Mammary epithelial cell (primary cell): ENCODE measurements at regions of chr1 and their contacts with region 1.

Region 1: DNA sequence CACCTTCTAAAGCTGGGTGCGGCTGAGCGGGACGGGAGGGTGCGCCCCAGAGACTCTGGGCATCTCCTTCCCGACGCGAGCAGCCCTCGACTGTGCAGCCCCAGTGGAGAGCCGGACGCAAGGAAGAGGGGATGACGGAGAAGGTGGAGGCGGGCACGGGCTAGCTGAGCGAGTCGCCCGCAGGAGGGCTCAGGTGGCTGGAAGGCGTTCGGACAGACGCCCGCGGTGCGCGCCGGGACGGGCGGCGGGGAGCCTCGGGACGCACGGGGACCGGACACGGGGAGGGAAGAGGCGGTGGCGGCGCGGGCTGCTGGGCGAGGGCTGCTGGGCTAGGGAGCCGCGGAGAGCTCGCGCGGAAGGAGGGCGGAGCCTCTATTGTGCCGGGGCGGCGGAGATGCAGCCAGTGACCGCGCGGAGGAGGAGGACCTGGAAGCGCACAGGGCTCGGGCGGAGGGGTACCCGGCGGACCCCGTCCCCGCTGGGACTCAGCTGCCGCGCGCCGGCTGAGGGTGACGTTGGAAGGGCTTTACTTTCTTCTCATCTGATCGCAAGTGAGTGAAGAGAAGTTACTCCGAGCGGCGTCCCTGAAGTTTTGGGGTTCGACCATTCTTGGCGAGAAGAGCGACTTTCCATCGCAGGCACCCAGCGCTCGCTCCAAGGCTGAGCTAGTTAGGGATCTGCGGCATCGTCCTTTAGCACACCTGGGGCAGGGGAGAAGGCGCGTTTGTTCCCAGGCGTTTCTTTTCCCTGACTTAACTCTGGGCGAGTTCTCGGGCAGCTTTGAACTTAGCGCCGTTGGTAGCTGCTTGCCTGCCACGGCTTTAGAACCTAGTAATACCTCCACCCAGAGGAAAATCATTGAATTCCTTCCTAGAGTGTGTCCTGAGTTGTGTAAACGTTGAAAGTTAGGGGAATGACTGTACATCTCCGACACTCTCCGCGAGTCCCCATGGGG is at the start of gene OLFML2B:
- DNase-seq: peak; percentile 78
- H3K4me3 ChIP-seq: peak within 1 kb of the TSS; percentile 68 to 75 (median 68)
- H3K27ac ChIP-seq: no peak within 1 kb of the TSS
- H3K4me1 ChIP-seq: peaks cover 10% of the 10 kb centered on the region
- H3K27me3 ChIP-seq: no peaks in the 10 kb centered on the region
- CTCF ChIP-seq: peak; percentile 30 to 42
- total RNA-seq, gene OLFML2B: 0.50 TPM in 1 of 2 donors, not detected in the other

Region 2: DNA sequence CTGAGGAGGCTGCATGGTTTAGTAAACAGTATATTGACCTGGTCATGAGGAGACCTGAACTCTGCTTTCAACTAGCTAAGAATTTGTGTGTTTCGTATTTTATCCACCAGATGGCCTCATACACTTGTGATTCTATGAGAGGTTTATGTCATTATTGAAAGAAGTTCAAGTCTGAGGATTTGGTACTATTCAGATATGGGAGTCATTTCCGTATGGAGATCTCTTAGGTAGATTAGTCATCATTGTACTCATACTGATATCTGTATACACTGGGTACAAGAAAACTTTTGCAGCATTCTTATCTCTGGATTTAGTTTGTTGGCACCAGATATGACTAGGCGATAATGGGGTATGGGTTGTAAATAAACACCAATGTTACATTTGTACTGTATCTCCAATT is 231.1 kb before region 1 on chr1:
- CTCF ChIA-PET with region 1: interaction called, 9 read pairs
- dilution Hi-C with region 1: no loop called
- in situ Hi-C with region 1: loop called in 1 of 2 experiments (anchors 5 kb)
- intact Hi-C with region 1: loop called (anchors 1 kb)
- DNase-seq: peak; percentile 79
- H3K4me3 ChIP-seq: no peak overlapping the region
- H3K27ac ChIP-seq: peak overlapping the region; percentile 16
- H3K4me1 ChIP-seq: peaks cover 12% of the 10 kb centered on the region
- H3K27me3 ChIP-seq: no peaks in the 10 kb centered on the region
- CTCF ChIP-seq: peak; percentile 44 to 56

Region 3: DNA sequence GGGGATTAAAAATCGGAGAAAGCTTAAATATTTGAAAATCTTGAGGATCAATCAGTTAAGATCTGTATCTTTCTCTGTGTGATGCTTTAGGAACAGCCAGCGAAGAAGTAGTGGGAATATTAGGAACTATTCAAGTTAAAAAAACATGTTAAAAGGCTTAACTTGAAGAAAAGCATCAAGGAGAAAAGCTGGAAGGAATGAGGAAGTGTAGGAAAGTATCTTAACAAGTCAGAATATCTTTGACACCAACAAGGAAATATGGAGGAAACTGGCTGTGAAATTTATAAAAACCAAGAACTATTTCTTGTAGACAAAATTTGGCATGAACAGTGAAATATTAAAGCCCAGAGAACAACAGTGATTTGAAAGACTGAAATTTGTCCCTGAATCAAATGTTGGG is 197.3 kb before region 1 on chr1:
- CTCF ChIA-PET with region 1: interaction called, 10 read pairs
- dilution Hi-C with region 1: no loop called
- in situ Hi-C with region 1: no loop called
- intact Hi-C with region 1: no loop called
- DNase-seq: no peak
- H3K4me3 ChIP-seq: no peak overlapping the region
- H3K27ac ChIP-seq: no peak overlapping the region
- H3K4me1 ChIP-seq: peaks cover 2% of the 10 kb centered on the region
- H3K27me3 ChIP-seq: no peaks in the 10 kb centered on the region
- CTCF ChIP-seq: no peak

Region 4: DNA sequence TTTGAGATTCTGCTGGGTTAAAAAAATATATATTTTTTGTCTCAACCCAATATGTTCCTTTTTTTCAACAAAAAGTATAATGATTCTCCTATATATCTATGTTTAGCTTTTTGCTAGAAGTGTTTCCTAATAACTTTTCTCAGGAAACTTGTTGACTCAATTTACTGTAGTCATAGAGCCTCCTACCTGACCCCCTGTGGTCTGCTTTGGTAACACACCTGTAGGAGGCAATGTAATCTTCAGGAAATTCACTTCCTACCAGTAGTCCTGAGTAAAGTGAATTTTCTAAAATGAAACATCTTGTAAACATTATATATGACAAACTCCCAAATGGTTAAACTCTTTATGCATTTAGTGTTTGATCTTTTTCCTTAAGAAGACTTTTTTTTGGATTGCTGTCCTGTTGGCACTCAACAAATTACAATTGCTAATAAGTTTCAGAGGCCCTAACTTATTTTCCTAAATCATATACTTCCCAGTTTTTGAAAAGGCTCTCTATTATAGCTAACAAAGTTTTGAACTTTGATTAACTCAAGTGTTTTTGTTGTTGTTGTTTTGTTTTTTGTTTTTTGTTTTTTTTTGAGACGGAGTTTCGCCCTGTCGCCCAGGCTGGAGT is 118.4 kb before region 1 on chr1:
- CTCF ChIA-PET with region 1: no interaction called
- dilution Hi-C with region 1: no loop called
- in situ Hi-C with region 1: no loop called
- intact Hi-C with region 1: loop called (anchors 5 kb)
- DNase-seq: peak; percentile 35
- H3K4me3 ChIP-seq: no peak overlapping the region
- H3K27ac ChIP-seq: no peak overlapping the region
- H3K4me1 ChIP-seq: peaks cover 6% of the 10 kb centered on the region
- H3K27me3 ChIP-seq: no peaks in the 10 kb centered on the region
- CTCF ChIP-seq: peak; percentile 70 to 77

Region 5: GRCh38 chr1:162003826-162004208 is 20.0 kb before region 1 on chr1:
- CTCF ChIA-PET with region 1: no interaction called
- dilution Hi-C with region 1: no loop called
- in situ Hi-C with region 1: no loop called
- intact Hi-C with region 1: no loop called
- DNase-seq: peak; percentile 81
- H3K4me3 ChIP-seq: no peak overlapping the region
- H3K27ac ChIP-seq: no peak overlapping the region
- H3K4me1 ChIP-seq: peaks cover 13% of the 10 kb centered on the region
- H3K27me3 ChIP-seq: peaks cover 21% of the 10 kb centered on the region
- CTCF ChIP-seq: no peak

Region 6: DNA sequence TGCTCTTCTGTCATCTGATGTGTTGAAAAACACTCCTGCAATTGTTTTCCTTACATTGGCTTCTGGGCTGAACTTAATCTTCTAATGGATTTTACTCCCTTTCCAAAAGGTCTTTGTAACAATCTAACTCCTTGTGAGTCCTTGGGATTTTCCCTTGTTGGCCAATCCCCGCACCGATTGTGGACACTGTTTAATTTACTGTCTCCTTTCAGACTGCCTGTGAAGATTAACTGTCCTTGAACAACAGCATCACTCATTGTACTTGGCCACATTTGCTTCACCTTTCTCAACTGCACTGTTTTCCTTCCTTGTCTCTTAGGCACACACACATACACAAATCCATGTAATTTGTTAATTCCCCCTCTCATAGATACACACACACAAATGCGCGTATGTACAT is 232.5 kb after region 1 on chr1:
- CTCF ChIA-PET with region 1: no interaction called
- dilution Hi-C with region 1: no loop called
- in situ Hi-C with region 1: no loop called
- intact Hi-C with region 1: no loop called
- DNase-seq: no peak
- H3K4me3 ChIP-seq: no peak overlapping the region
- H3K27ac ChIP-seq: no peak overlapping the region
- H3K4me1 ChIP-seq: no peaks in the 10 kb centered on the region
- H3K27me3 ChIP-seq: no peaks in the 10 kb centered on the region
- CTCF ChIP-seq: no peak